Tibial artery (tissue), 4 donors: ENCODE measurements at regions of chr4 and their contacts with region 1.

Region 1: GRCh38 chr4:153204247-153205027 is at the start of gene TRIM2:
- DNase-seq: peak; percentile 72 to 83
- H3K4me3 ChIP-seq: no peak within 1 kb of the TSS
- H3K27ac ChIP-seq: no peak within 1 kb of the TSS
- H3K4me1 ChIP-seq: peaks cover 0 to 8% (median 0%) of the 10 kb centered on the region in 4 donors
- H3K27me3 ChIP-seq: no peaks in the 10 kb centered on the region
- CTCF ChIP-seq: no peak

Region 2: GRCh38 chr4:153318696-153319320 is 114.4 kb after region 1 on chr4:
- intact Hi-C with region 1: loop called (anchors 5 kb)
- DNase-seq: no peak
- H3K4me3 ChIP-seq: no peak overlapping the region
- H3K27ac ChIP-seq: no peak overlapping the region
- H3K4me1 ChIP-seq: no peaks in the 10 kb centered on the region
- H3K27me3 ChIP-seq: no peaks in the 10 kb centered on the region
- CTCF ChIP-seq: peak; percentile 59 to 64

Region 3: GRCh38 chr4:153781717-153782416 is 577.4 kb after region 1 on chr4:
- intact Hi-C with region 1: no loop called
- DNase-seq: no peak
- H3K4me3 ChIP-seq: no peak overlapping the region
- H3K27ac ChIP-seq: no peak overlapping the region
- H3K4me1 ChIP-seq: no peaks in the 10 kb centered on the region
- H3K27me3 ChIP-seq: peaks cover 0 to 15% of the 10 kb centered on the region in 2 donors
- CTCF ChIP-seq: no peak